ENCODE measurements at regions of chr20 and their contacts with region 1.

Region 1: GRCh38 chr20:38893565-38894090 is 32.6 kb upstream of the FAM83D start:
- DNase-seq: peak; percentile 82
- ATAC-seq: peak; percentile 93
- H3K4me3 Mint-ChIP-seq: peak overlapping the region; percentile 3
- H3K27ac Mint-ChIP-seq: peak overlapping the region; percentile 73
- H3K4me1 Mint-ChIP-seq: peaks cover 46% of the 10 kb centered on the region
- H3K27me3 Mint-ChIP-seq: no peaks in the 10 kb centered on the region

Region 2: GRCh38 chr20:38645980-38646858 is 247.4 kb before region 1 on chr20:
- CTCF ChIA-PET with region 1: interaction called, 10 read pairs
- POLR2A ChIA-PET with region 1: no interaction called
- DNase-seq: peak; percentile 91
- ATAC-seq: peak; percentile 95
- H3K4me3 Mint-ChIP-seq: peak overlapping the region; percentile 61
- H3K27ac Mint-ChIP-seq: no peak overlapping the region
- H3K4me1 Mint-ChIP-seq: peaks cover 10% of the 10 kb centered on the region
- H3K27me3 Mint-ChIP-seq: peaks cover 43% of the 10 kb centered on the region

Region 3: DNA sequence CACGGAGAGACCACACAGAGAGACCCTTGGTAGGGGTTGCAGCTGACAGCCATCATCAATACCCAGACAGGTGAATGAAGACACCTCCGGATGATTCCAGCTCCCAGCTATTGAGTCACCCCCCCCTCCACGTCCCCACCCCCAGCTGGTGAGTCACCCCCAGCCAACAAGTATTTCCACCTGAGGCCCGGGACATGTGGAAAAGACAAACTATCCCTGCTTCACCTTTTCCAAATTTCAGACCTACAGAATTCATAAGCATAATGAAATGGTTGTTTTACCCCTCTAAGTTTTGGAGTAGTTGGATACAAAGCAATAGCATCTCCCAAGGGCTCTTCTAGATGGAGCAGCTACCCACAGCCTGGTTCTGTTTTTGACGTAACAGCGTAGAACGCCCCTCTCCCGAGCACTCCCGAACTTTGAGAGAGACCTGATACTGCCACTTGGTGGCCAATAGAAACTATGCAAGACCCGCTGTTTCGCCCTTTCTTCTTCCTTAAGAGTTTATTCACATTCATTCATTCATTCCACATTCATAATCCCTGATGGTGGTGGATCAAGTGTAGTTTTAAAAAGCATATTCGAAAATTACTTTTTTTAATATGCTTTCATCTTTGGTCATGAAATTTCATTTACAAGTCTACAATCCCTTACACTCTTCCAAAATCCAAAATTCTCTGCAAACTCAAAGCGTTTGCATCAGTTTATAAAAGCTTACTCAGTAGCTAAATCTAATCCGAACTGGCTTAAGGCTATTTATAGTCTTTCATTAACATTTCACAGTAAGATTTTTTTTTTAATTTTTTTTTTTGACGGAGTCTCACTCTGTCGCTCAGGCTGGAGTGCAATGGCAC is 103.2 kb before region 1 on chr20:
- CTCF ChIA-PET with region 1: interaction called, 16 read pairs
- POLR2A ChIA-PET with region 1: no interaction called
- DNase-seq: peak; percentile 63
- ATAC-seq: peak; percentile 51
- H3K4me3 Mint-ChIP-seq: no peak overlapping the region
- H3K27ac Mint-ChIP-seq: no peak overlapping the region
- H3K4me1 Mint-ChIP-seq: peaks cover 21% of the 10 kb centered on the region
- H3K27me3 Mint-ChIP-seq: peaks cover 4% of the 10 kb centered on the region

Region 4: DNA sequence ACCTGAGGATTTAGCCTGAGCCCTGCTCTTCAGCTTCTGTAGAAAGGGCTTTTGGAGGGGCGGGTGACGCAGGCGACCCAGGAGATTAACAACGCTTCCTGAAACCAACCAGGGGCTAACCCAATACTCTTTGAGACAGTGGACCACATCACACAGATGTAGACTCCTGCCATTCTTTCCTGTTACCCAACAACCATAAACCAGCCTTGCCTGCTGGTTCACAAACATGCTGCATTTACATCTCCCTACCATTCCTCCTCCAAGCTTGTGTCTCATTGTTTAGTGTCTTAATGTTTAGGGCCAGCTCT is 59.8 kb before region 1 on chr20:
- CTCF ChIA-PET with region 1: interaction called, 11 read pairs
- POLR2A ChIA-PET with region 1: no interaction called
- DNase-seq: peak; percentile 50
- ATAC-seq: peak; percentile 70
- H3K4me3 Mint-ChIP-seq: peak overlapping the region; percentile 24
- H3K27ac Mint-ChIP-seq: peak overlapping the region; percentile 53
- H3K4me1 Mint-ChIP-seq: peaks cover 54% of the 10 kb centered on the region
- H3K27me3 Mint-ChIP-seq: no peaks in the 10 kb centered on the region

Region 5: DNA sequence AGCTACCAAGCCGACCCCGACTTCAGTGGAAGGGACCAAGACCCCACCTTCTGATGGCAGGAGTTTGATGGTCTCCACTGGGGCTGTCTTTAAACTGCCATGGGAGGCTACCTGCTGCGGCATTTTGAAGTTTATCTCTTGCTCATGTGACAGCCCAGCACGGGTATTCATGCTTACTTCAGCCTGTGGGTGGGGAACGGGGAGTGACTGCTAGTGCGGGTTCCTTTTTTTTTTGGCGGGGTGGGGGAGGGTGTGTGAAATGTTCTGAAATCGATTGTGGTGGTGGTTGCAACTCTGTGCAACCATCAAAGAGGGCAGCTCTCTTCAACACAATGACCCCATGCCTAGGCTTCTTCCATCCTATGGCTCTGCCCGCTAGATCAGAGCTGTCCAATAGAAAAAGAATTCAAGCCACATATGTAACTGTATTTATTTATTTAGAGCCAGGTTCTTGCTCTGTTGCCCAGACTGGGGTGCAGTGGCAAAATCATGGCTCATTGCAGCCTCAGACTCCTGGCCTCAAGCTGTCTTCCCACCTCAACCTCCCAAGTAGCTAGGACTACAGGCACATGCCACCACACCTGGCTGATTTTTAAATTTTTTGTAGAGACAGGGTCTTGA is 34.4 kb before region 1 on chr20:
- CTCF ChIA-PET with region 1: interaction called, 13 read pairs
- POLR2A ChIA-PET with region 1: no interaction called
- DNase-seq: peak; percentile 50
- ATAC-seq: peak; percentile 55
- H3K4me3 Mint-ChIP-seq: peak overlapping the region; percentile 10
- H3K27ac Mint-ChIP-seq: peak overlapping the region; percentile 79
- H3K4me1 Mint-ChIP-seq: peaks cover 81% of the 10 kb centered on the region
- H3K27me3 Mint-ChIP-seq: no peaks in the 10 kb centered on the region

Region 6: DNA sequence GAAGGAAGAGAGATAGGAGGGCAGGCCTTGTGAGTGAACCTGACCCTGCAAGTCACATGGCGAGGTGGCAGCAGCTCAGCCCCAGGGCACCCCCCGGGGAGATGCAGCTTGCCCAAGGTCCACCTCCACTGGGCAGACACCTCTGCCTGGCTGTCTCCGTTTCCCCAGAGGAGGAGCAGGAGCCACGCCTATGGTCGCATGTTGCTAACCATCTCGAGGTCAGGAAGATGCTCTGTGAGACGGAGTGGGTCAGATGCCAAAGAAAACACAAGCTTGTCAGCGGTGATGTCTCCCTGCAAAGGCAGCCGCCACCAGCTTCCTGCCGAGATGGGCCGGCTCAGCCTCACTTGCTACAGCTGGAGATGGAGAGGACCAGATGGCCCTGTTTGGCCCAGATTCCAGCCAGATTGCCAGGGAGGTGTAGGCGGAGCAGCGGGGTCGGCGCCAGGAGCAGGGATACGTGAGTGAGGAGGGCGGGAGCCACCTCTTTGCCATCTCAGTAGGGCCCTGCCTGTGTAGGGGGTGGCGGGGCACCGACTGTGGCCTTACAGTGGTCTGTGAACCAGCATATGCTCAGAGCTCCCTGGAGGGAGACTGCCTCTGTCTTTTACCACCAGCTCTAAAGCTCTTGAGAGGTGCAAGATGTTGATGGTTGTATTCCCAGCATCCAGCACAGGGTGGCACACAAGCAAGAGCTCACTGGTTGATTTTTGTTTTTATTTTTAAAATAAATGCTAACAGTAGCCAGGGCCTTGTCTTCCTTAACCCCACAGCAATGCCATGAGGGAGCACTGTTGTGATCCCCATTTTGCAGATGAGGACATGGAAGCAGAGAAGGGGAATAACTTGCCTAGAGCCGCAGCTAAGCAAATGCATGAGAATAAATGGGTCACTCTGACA is 10.3 kb before region 1 on chr20:
- CTCF ChIA-PET with region 1: interaction called, 23 read pairs
- POLR2A ChIA-PET with region 1: interaction called, 6 read pairs
- DNase-seq: no peak
- ATAC-seq: peak; percentile 35
- H3K4me3 Mint-ChIP-seq: peak overlapping the region; percentile 6
- H3K27ac Mint-ChIP-seq: peak overlapping the region; percentile 80
- H3K4me1 Mint-ChIP-seq: peaks cover 62% of the 10 kb centered on the region
- H3K27me3 Mint-ChIP-seq: no peaks in the 10 kb centered on the region

Region 7: GRCh38 chr20:38935285-38935684 is 41.7 kb after region 1 on chr20:
- CTCF ChIA-PET with region 1: no interaction called
- POLR2A ChIA-PET with region 1: no interaction called
- DNase-seq: no peak
- ATAC-seq: no peak
- H3K4me3 Mint-ChIP-seq: no peak overlapping the region
- H3K27ac Mint-ChIP-seq: no peak overlapping the region
- H3K4me1 Mint-ChIP-seq: peaks cover 34% of the 10 kb centered on the region
- H3K27me3 Mint-ChIP-seq: no peaks in the 10 kb centered on the region